ENCODE measurements at regions of chr14 and their contacts with region 1.

Region 1: DNA sequence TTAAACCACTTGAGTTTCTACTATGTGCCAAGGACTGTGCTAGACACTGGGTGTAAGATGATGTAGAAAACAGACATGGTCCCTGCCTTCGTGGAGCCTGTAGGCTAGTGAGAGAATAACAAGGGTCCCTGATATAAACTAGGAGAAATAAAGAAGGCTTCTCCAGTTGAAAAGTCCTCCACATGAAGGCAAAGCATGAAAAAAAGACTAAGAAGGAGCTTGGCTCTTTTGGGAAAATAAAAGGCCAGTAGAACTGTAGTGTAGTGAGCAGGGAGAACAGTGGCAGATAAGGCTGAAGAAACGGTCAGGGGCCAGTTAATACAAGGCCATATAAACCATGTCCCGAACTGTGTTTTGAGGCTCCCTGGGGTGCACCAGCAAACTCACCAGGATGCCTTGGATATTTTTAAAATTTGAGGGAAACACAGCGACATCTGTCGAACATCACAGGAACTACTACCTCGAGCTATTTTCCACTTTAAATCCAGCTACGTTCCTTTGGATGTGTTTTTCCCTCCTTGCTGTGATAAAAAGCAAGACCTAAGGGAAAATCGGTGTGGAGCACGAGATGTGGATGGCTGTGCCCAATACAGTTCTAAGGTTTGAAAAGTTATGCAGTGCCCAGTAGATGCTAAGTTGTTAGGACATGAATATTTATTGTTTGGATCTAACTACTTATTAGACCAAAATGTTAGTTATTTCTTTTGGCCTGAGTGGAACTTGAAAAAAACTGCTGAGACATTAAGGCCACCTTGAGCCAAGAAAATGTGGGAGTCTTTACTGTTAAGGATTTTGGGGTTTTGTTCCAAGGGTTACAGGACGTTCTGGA is 8.5 kb upstream of the CFL2 start:
- DNase-seq: peak; percentile 64
- ATAC-seq: peak; percentile 58
- H3K4me3 ChIP-seq: no peak overlapping the region
- H3K4me3 Mint-ChIP-seq: no peak overlapping the region
- H3K27ac ChIP-seq: no peak overlapping the region
- H3K27ac Mint-ChIP-seq: no peak overlapping the region
- H3K4me1 ChIP-seq: peaks cover 0 to 5% of the 10 kb centered on the region in 2 donors
- H3K4me1 Mint-ChIP-seq: peaks cover 5% of the 10 kb centered on the region
- H3K27me3 ChIP-seq: no peaks in the 10 kb centered on the region
- H3K27me3 Mint-ChIP-seq: no peaks in the 10 kb centered on the region
- CTCF ChIP-seq: peak; percentile 94

Region 2: GRCh38 chr14:34671716-34672115 is 51.2 kb before region 1 on chr14:
- CTCF ChIA-PET with region 1: interaction called, 157 read pairs
- POLR2A ChIA-PET with region 1: no interaction called
- intact Hi-C with region 1: loop called (anchors 1 kb)
- DNase-seq: no peak
- ATAC-seq: no peak
- H3K4me3 ChIP-seq: no peak overlapping the region
- H3K4me3 Mint-ChIP-seq: no peak overlapping the region
- H3K27ac ChIP-seq: no peak overlapping the region
- H3K27ac Mint-ChIP-seq: no peak overlapping the region
- H3K4me1 ChIP-seq: no peaks in the 10 kb centered on the region
- H3K4me1 Mint-ChIP-seq: no peaks in the 10 kb centered on the region
- H3K27me3 ChIP-seq: no peaks in the 10 kb centered on the region
- H3K27me3 Mint-ChIP-seq: no peaks in the 10 kb centered on the region
- CTCF ChIP-seq: no peak

Region 3: DNA sequence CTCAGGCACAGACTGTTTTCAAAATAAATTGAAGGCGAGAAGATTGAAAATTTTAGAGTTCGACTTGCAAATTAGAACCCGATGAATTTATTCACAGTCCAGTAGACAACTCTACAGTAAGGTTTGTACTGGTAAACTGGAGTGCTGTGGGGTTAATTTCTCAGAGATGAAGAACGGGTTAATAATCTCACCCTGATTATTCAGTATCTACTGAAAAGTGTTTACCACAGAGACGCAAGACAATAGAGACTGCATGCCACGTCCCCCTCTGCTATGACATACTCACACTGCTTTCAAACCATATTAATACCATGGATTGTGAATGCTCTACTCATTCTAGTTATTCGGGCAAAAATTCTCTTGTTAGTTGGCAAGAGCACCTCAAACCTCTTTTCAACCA is 44.6 kb before region 1 on chr14:
- CTCF ChIA-PET with region 1: interaction called, 157 read pairs
- POLR2A ChIA-PET with region 1: no interaction called
- intact Hi-C with region 1: no loop called
- DNase-seq: no peak
- ATAC-seq: no peak
- H3K4me3 ChIP-seq: no peak overlapping the region
- H3K4me3 Mint-ChIP-seq: no peak overlapping the region
- H3K27ac ChIP-seq: no peak overlapping the region
- H3K27ac Mint-ChIP-seq: no peak overlapping the region
- H3K4me1 ChIP-seq: no peaks in the 10 kb centered on the region
- H3K4me1 Mint-ChIP-seq: no peaks in the 10 kb centered on the region
- H3K27me3 ChIP-seq: no peaks in the 10 kb centered on the region
- H3K27me3 Mint-ChIP-seq: no peaks in the 10 kb centered on the region
- CTCF ChIP-seq: no peak

Region 4: DNA sequence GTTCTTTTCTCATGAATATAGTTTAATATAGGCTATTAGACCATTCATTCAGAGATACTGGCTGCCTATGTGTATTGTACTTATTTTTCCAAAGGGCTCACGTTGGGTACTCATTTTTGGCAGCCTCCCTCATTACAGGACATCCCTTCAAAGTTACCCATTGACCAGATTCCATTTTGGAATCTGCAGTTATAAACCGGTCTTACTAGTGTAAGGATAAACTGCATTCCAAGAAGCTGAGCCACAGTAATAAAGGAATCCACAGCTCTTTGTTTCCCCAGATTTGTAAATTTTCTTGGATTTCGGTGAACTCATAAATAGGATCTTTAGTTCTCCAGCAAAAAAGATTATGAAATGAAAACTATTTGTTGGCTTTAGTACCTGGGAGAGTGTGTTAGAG is 10.3 kb after region 1 on chr14:
- CTCF ChIA-PET with region 1: interaction called, 15 read pairs
- POLR2A ChIA-PET with region 1: no interaction called
- intact Hi-C with region 1: no loop called
- DNase-seq: no peak
- ATAC-seq: no peak
- H3K4me3 ChIP-seq: no peak overlapping the region
- H3K4me3 Mint-ChIP-seq: no peak overlapping the region
- H3K27ac ChIP-seq: no peak overlapping the region
- H3K27ac Mint-ChIP-seq: no peak overlapping the region
- H3K4me1 ChIP-seq: no peaks in the 10 kb centered on the region
- H3K4me1 Mint-ChIP-seq: no peaks in the 10 kb centered on the region
- H3K27me3 ChIP-seq: no peaks in the 10 kb centered on the region
- H3K27me3 Mint-ChIP-seq: no peaks in the 10 kb centered on the region
- CTCF ChIP-seq: no peak

Region 5: GRCh38 chr14:34749408-34749807 is 26.5 kb after region 1 on chr14:
- CTCF ChIA-PET with region 1: interaction called, 12 read pairs
- POLR2A ChIA-PET with region 1: no interaction called
- intact Hi-C with region 1: no loop called
- DNase-seq: no peak
- ATAC-seq: no peak
- H3K4me3 ChIP-seq: no peak overlapping the region
- H3K4me3 Mint-ChIP-seq: no peak overlapping the region
- H3K27ac ChIP-seq: no peak overlapping the region
- H3K27ac Mint-ChIP-seq: no peak overlapping the region
- H3K4me1 ChIP-seq: no peaks in the 10 kb centered on the region
- H3K4me1 Mint-ChIP-seq: no peaks in the 10 kb centered on the region
- H3K27me3 ChIP-seq: no peaks in the 10 kb centered on the region
- H3K27me3 Mint-ChIP-seq: no peaks in the 10 kb centered on the region
- CTCF ChIP-seq: no peak

Measured in B cell (primary cell).